IMR-90 (cell line): ENCODE measurements at regions of chr1 and their contacts with region 1.

Region 1: GRCh38 chr1:175834597-175834996 is 91.2 kb upstream of the TNR start:
- DNase-seq: no peak
- ATAC-seq: no peak
- H3K4me3 ChIP-seq: no peak overlapping the region
- H3K27ac ChIP-seq: no peak overlapping the region
- H3K4me1 ChIP-seq: no peaks in the 10 kb centered on the region
- H3K27me3 ChIP-seq: no peaks in the 10 kb centered on the region
- CTCF ChIP-seq: no peak
- POLR2A ChIP-seq: no peak
- RAD21 ChIP-seq: no peak

Region 2: DNA sequence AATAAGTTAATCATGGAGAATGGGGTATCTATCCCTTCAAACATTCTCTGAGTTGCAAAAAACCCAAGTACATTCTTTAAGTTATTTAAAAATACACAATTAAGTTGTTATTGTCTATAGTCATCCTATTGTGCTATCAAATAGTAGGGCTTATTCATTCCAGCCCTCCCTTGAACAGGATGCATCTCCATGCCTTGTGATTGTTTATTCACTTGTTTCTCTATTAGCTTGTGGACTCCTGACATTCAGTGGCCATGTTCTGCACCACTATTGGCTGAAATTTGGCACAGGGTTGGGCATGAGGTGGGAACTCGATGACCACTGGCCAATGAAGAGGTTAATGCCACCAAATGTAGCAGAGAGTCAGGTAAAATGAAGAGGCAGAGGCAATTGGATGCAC is 364.0 kb before region 1 on chr1:
- CTCF ChIA-PET with region 1: no interaction called
- POLR2A ChIA-PET with region 1: no interaction called
- dilution Hi-C with region 1: no loop called
- in situ Hi-C with region 1: no loop called
- intact Hi-C with region 1: no loop called
- DNase-seq: no peak
- ATAC-seq: no peak
- H3K4me3 ChIP-seq: no peak overlapping the region
- H3K27ac ChIP-seq: no peak overlapping the region
- H3K4me1 ChIP-seq: no peaks in the 10 kb centered on the region
- H3K27me3 ChIP-seq: no peaks in the 10 kb centered on the region
- CTCF ChIP-seq: no peak
- POLR2A ChIP-seq: no peak
- RAD21 ChIP-seq: no peak

Region 3: GRCh38 chr1:175563236-175563895 is 271.2 kb before region 1 on chr1:
- CTCF ChIA-PET with region 1: no interaction called
- POLR2A ChIA-PET with region 1: no interaction called
- dilution Hi-C with region 1: no loop called
- in situ Hi-C with region 1: no loop called
- intact Hi-C with region 1: no loop called
- DNase-seq: no peak
- ATAC-seq: no peak
- H3K4me3 ChIP-seq: no peak overlapping the region
- H3K27ac ChIP-seq: no peak overlapping the region
- H3K4me1 ChIP-seq: no peaks in the 10 kb centered on the region
- H3K27me3 ChIP-seq: no peaks in the 10 kb centered on the region
- CTCF ChIP-seq: no peak
- POLR2A ChIP-seq: no peak
- RAD21 ChIP-seq: no peak

Region 4: DNA sequence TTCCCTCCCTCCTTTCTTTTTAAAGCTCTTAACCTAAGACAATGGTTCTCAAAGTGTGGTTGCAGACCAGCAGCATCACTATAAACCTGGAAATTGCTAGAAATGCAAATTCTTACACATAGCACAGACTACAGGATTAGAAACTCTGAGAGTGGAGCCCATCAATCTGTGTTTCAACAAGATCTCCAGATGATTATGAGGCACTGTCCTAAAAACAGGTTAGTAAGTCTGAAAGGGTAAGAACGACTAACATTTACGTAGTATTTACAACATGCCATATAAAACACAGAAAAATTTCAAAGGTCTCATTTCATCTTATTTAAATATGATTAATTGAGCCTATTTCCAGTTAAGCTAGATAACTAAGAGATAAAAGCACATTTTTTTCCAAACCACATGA is 233.7 kb after region 1 on chr1:
- CTCF ChIA-PET with region 1: interaction called, 4 read pairs
- POLR2A ChIA-PET with region 1: interaction called, 10 read pairs
- dilution Hi-C with region 1: no loop called
- in situ Hi-C with region 1: no loop called
- intact Hi-C with region 1: no loop called
- DNase-seq: no peak
- ATAC-seq: no peak
- H3K4me3 ChIP-seq: no peak overlapping the region
- H3K27ac ChIP-seq: no peak overlapping the region
- H3K4me1 ChIP-seq: no peaks in the 10 kb centered on the region
- H3K27me3 ChIP-seq: no peaks in the 10 kb centered on the region
- CTCF ChIP-seq: no peak
- POLR2A ChIP-seq: no peak
- RAD21 ChIP-seq: no peak